Aorta (tissue), 5 donors: ENCODE measurements at regions of chr3 and their contacts with region 1.

Region 1: GRCh38 chr3:124078953-124079911 is 87.3 kb upstream of the ROPN1 start:
- DNase-seq: no peak
- ATAC-seq: no peak
- H3K4me3 ChIP-seq: no peak overlapping the region
- H3K27ac ChIP-seq: no peak overlapping the region
- H3K4me1 ChIP-seq: peaks cover 3 to 9% of the 10 kb centered on the region in 2 donors
- H3K27me3 ChIP-seq: no peaks in the 10 kb centered on the region

Region 2: DNA sequence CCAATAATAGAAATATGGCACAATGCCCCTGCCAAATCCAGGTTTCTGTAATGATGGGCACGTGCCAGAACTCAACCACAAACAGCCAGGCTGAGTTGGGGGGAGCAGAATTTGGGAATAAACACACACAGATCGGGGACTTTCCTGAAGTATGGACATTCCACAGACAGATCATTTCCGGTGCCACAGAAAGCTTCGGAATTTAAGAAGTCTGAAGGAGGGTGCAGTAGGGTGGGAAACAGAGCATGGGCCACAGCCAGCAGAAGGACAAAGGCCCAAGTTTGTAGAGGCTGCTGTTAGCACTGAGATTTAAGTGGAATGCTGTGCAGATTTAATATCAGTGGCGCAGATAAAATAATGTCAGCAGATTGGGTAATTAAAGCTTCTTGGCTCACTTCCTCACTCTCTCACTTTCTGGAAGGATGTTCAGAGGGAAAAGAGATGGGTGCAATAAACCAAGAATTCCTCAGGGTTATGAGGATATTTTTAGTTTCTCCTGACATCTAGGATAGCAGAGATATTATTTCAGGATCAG is 262.5 kb before region 1 on chr3:
- intact Hi-C with region 1: no loop called
- DNase-seq: no peak
- ATAC-seq: peak; percentile 22
- H3K4me3 ChIP-seq: no peak overlapping the region
- H3K27ac ChIP-seq: peak overlapping the region; percentile 61 to 81
- H3K4me1 ChIP-seq: peaks cover 2 to 7% of the 10 kb centered on the region in 2 donors
- H3K27me3 ChIP-seq: no peaks in the 10 kb centered on the region

Region 3: GRCh38 chr3:124014366-124014942 is 64.8 kb before region 1 on chr3:
- intact Hi-C with region 1: loop called in 1 of 2 experiments (anchors 5 kb)
- DNase-seq: peak in 1 of 2 donors; percentile 61
- ATAC-seq: peak; percentile 40
- H3K4me3 ChIP-seq: no peak overlapping the region
- H3K27ac ChIP-seq: peak overlapping the region; percentile 36 to 85
- H3K4me1 ChIP-seq: peaks cover 6 to 8% of the 10 kb centered on the region in 2 donors
- H3K27me3 ChIP-seq: no peaks in the 10 kb centered on the region

Region 4: DNA sequence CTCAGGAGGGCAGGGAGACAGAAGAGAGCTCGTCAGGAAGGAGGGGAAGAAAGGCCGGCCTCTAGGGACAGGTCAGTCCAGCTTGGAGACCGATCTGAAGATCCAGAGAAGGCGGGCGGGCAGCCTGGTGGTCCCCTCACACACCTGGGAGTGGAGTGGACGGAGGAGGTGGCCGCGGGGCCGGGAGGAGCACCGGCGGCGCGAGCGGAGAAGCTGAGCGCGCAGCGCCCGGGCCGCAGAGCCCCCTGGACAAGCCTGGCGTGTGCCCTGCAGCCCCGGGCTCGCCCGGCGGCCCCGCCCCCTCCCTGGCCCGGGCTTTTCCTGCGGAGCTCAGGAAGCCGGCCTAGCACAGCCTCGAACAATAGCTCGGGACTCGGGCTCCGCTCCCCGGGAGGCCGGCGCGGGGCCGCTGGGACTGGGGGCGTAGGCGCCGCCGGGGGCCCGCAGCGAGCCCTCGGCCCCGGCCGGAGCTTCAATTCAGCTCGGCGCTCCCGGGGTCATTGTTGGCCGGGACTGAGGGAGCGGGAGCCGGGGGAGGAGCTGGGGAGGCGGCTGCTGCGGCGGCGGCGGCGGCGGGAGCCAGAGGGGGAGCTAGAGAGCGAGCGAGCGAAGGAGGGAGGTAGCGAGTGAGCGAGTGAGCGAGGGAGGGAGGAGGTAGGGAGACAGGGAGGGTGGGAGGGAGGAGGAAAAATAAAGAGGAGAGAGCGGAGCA is 46.4 kb before region 1 on chr3:
- intact Hi-C with region 1: loop called (anchors 1 to 5 kb)
- DNase-seq: peak; percentile 89 to 97
- ATAC-seq: peak; percentile 92
- H3K4me3 ChIP-seq: peak overlapping the region; percentile 93 to 99
- H3K27ac ChIP-seq: peak overlapping the region; percentile 85 to 92
- H3K4me1 ChIP-seq: peaks cover 0 to 5% of the 10 kb centered on the region in 2 donors
- H3K27me3 ChIP-seq: no peaks in the 10 kb centered on the region